ENCODE measurements at regions of chr2 and their contacts with region 1.

Region 1: DNA sequence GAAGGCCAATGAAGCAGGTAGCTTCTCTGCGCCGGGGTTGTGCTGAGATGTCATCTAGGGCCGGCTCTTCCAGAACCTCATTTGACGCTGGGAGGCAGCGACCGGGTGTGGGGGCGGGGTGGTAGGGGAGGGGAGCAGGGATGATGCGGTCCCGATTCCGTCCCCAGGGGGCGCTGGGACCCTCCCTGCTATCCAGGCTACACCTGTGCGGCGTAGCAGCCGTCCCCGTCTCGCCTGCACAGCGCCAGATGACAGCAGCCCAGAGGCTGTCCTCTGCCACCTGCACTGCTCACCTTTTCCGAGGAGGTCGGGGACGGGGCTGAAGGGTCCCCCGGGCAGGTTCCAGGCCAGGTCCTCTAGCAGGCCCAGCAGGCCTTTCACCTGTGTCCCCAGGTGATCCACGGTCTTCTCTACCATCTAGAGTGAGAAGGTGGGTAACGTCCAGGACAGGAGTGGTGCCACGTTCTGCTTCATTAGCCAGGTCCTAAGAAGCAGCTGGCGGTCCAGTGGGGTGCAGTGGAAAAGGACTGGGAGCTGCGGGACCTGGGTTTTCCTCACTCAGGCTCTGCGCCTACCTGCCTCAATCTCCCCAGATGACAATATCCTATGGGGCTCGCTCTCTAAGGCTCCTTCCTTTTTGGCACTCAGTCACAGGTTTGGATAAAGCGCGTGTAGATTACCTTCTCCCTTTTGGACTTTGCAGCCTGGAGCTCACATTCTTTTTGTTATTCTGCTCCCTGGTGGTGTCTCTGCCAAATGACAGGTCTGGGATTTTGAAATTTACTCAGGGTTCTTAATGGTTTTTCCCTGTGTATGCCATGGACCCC is 56.0 kb upstream of the RAB6C start:
- DNase-seq: peak; percentile 64 to 72
- H3K4me3 ChIP-seq: peak overlapping the region; percentile 22
- H3K4me3 Mint-ChIP-seq: peak overlapping the region; percentile 70
- H3K27ac Mint-ChIP-seq: no peak overlapping the region
- H3K4me1 ChIP-seq: peaks cover 4% of the 10 kb centered on the region; the same call in 1 of the 2 replicates
- H3K4me1 Mint-ChIP-seq: no peaks in the 10 kb centered on the region
- H3K27me3 ChIP-seq: no peaks in the 10 kb centered on the region
- H3K27me3 Mint-ChIP-seq: peaks cover 14% of the 10 kb centered on the region
- CTCF ChIP-seq: peak; percentile 62 to 66

Region 2: GRCh38 chr2:128736689-128737545 is 1186.6 kb before region 1 on chr2:
- CTCF ChIA-PET with region 1: no interaction called
- POLR2A ChIA-PET with region 1: no interaction called
- intact Hi-C with region 1: loop called (anchors 5 kb)
- DNase-seq: peak; percentile 60 to 72
- H3K4me3 ChIP-seq: no peak overlapping the region
- H3K4me3 Mint-ChIP-seq: no peak overlapping the region
- H3K27ac Mint-ChIP-seq: no peak overlapping the region
- H3K4me1 ChIP-seq: no peaks in the 10 kb centered on the region
- H3K4me1 Mint-ChIP-seq: no peaks in the 10 kb centered on the region
- H3K27me3 ChIP-seq: no peaks in the 10 kb centered on the region
- H3K27me3 Mint-ChIP-seq: peaks cover 3% of the 10 kb centered on the region
- CTCF ChIP-seq: peak; percentile 92 to 95

Region 3: DNA sequence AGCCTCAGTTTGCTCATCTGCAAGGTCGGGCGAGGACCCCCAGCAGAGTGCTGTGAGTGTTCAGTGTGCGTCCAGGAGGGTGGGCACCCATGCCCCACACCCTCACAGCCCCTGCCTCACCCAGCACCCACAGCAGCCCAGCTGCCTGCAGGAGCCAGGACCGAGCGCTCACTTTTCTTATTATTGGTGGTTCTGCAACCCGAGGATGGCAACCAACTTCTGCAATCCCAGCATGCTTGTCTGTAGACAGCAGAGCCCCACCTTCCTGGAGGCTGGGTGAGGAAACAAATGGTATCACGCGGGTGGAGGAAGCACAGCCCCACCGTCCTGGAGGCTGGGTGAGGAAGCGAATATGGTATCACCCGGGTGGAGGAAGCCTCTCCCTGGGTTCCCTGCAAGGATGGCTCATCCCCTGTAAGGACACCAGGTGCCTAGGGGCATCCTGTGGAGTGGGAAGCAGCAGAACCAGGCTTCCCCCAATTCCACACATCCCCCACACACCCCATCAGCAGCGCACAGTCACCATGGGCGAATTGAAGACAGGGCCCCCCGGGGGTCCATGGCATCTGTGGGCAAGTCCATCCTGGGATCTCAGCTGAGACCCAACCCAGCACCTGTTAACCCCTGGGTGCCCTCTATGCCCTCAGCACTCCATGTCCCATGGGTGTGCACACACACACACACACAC is 164.6 kb before region 1 on chr2:
- CTCF ChIA-PET with region 1: interaction called, 7 read pairs
- POLR2A ChIA-PET with region 1: no interaction called
- intact Hi-C with region 1: loop called (anchors 5 kb)
- DNase-seq: peak in 1 of 2 experiments; percentile 23
- H3K4me3 ChIP-seq: no peak overlapping the region
- H3K4me3 Mint-ChIP-seq: no peak overlapping the region
- H3K27ac Mint-ChIP-seq: no peak overlapping the region
- H3K4me1 ChIP-seq: no peaks in the 10 kb centered on the region
- H3K4me1 Mint-ChIP-seq: no peaks in the 10 kb centered on the region
- H3K27me3 ChIP-seq: no peaks in the 10 kb centered on the region
- H3K27me3 Mint-ChIP-seq: peaks cover 8% of the 10 kb centered on the region
- CTCF ChIP-seq: no peak

Region 4: DNA sequence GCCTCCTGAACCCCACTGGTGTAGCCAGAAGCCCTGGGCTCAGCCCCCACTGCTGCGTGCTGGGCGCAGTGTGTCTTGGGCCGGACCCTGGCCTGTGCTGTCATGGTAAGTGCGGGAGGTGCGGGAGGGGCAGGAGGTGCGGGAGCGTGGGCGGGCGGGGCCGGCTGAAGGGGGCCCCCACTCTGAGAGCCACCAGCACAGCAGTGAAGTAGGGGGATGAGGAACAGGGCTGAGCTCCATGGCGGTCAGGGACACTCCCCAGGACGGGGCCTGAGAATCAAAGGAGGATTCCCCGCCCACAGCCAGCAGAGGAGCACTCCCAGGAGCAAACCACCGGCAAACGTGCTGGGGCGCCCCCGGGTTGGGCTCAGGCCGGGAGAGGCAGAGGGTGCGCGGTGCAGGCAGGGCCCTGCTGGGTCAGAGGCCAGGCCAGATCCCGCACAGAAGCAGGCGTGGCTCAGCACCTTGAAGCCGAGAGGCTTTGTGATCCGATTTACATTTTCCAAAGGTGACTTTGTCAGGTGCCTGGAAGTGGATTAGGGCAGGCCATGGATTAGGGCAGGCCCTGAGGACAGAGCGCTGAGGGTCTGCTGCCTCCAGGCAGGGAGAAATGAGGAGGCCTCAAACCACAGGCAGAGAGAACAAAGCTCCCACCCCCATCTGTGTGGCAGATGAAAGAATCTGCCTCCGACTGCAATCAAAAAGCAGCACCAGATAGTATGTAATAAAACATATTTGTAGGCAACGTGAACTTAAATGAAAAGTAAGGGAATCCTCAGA is 96.0 kb before region 1 on chr2:
- CTCF ChIA-PET with region 1: no interaction called
- POLR2A ChIA-PET with region 1: no interaction called
- intact Hi-C with region 1: no loop called
- DNase-seq: peak in 1 of 2 experiments; percentile 12
- H3K4me3 ChIP-seq: no peak overlapping the region
- H3K4me3 Mint-ChIP-seq: no peak overlapping the region
- H3K27ac Mint-ChIP-seq: no peak overlapping the region
- H3K4me1 ChIP-seq: no peaks in the 10 kb centered on the region
- H3K4me1 Mint-ChIP-seq: no peaks in the 10 kb centered on the region
- H3K27me3 ChIP-seq: no peaks in the 10 kb centered on the region
- H3K27me3 Mint-ChIP-seq: peaks cover 5% of the 10 kb centered on the region
- CTCF ChIP-seq: no peak

Region 5: DNA sequence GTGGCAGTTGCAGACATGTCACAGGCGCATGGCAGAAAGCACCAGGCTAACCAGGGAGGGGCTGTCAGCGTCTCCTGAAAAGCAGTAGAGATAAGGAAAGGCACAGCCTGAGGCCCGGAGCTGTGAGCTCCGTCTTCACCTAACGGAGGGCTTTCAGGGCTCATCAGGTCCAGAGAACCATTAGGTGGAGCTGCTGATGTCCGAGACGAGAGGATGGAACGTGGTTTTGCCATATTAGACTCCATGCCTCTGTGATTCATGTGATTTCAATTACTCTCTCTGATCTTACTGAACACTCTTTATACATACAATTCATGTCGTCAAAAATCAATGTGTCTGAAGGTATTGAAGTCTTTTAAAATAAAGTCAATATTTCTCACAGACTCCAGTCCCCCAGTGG is 64.3 kb before region 1 on chr2:
- CTCF ChIA-PET with region 1: interaction called, 8 read pairs
- POLR2A ChIA-PET with region 1: no interaction called
- intact Hi-C with region 1: loop called (anchors 1 kb)
- DNase-seq: no peak
- H3K4me3 ChIP-seq: no peak overlapping the region
- H3K4me3 Mint-ChIP-seq: no peak overlapping the region
- H3K27ac Mint-ChIP-seq: no peak overlapping the region
- H3K4me1 ChIP-seq: no peaks in the 10 kb centered on the region
- H3K4me1 Mint-ChIP-seq: no peaks in the 10 kb centered on the region
- H3K27me3 ChIP-seq: no peaks in the 10 kb centered on the region
- H3K27me3 Mint-ChIP-seq: peaks cover 6% of the 10 kb centered on the region
- CTCF ChIP-seq: no peak

Region 6: DNA sequence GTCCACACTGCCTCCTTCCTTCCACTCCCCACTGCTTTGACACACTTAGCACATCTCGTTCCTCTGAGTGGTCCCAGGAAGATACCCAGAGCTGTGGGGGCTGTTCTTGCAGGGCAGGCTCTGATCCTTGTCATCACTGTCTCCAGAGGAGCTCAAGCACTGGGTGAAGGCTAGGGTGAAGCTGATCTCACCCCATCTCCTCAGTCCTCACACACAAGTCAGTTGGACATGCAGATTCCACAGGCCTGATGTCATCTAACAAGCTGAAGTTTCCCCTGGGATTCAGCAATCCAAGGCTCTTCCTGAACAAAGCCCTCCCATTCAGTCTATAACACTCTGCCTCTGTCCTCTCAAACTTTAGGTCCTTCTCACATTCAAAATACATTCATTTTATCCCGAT is 34.6 kb before region 1 on chr2:
- CTCF ChIA-PET with region 1: no interaction called
- POLR2A ChIA-PET with region 1: no interaction called
- intact Hi-C with region 1: no loop called
- DNase-seq: no peak
- H3K4me3 ChIP-seq: no peak overlapping the region
- H3K4me3 Mint-ChIP-seq: no peak overlapping the region
- H3K27ac Mint-ChIP-seq: no peak overlapping the region
- H3K4me1 ChIP-seq: peaks cover 4% of the 10 kb centered on the region; the same call in 1 of the 2 replicates
- H3K4me1 Mint-ChIP-seq: no peaks in the 10 kb centered on the region
- H3K27me3 ChIP-seq: peaks cover 1% of the 10 kb centered on the region; the same call in 1 of the 2 replicates
- H3K27me3 Mint-ChIP-seq: peaks cover 21% of the 10 kb centered on the region
- CTCF ChIP-seq: no peak

Region 7: GRCh38 chr2:129945537-129945936 is 22.1 kb after region 1 on chr2:
- CTCF ChIA-PET with region 1: no interaction called
- POLR2A ChIA-PET with region 1: no interaction called
- intact Hi-C with region 1: no loop called
- DNase-seq: no peak
- H3K4me3 ChIP-seq: no peak overlapping the region
- H3K4me3 Mint-ChIP-seq: no peak overlapping the region
- H3K27ac Mint-ChIP-seq: no peak overlapping the region
- H3K4me1 ChIP-seq: no peaks in the 10 kb centered on the region
- H3K4me1 Mint-ChIP-seq: no peaks in the 10 kb centered on the region
- H3K27me3 ChIP-seq: no peaks in the 10 kb centered on the region
- H3K27me3 Mint-ChIP-seq: peaks cover 11% of the 10 kb centered on the region
- CTCF ChIP-seq: no peak

Measured in Caco-2 (cell line).